Breast epithelium (tissue), 4 donors: ENCODE measurements at regions of chr5 and their contacts with region 1.

Region 1: GRCh38 chr5:115884704-115885103 is 43.0 kb downstream of the AP3S1 start:
- DNase-seq: no peak
- H3K4me3 ChIP-seq: no peak overlapping the region
- H3K27ac ChIP-seq: no peak overlapping the region
- H3K4me1 ChIP-seq: no peaks in the 10 kb centered on the region
- H3K27me3 ChIP-seq: no peaks in the 10 kb centered on the region
- CTCF ChIP-seq: no peak
- POLR2A ChIP-seq: no peak

Region 2: DNA sequence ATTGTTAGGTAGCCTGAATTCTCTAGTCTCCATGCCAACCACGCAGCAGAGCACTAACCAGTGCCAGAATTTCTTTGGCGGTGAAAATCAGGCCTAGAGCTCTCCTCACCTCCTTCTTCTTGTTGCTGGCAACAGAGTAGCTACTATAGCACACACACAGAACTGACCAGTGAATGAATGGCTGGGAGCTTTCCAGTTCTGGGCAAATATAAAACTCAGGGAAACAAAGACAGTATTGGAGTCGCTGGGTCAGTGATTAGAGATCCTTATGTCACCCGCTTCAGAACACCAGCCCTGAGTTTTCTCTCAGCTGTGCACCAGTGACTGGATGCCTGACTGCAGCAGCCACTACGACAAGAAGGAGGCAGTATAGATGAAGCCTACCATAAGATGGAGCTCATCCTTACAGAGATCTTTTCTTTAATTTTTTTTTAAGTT is 313.2 kb before region 1 on chr5:
- intact Hi-C with region 1: loop called (anchors 5 kb)
- DNase-seq: peak in 1 of 2 donors; percentile 69
- H3K4me3 ChIP-seq: no peak overlapping the region
- H3K27ac ChIP-seq: peak overlapping the region; percentile 44 to 50
- H3K4me1 ChIP-seq: no peaks in the 10 kb centered on the region
- H3K27me3 ChIP-seq: no peaks in the 10 kb centered on the region
- CTCF ChIP-seq: no peak
- POLR2A ChIP-seq: no peak

Region 3: GRCh38 chr5:115898656-115899055 is 14.0 kb after region 1 on chr5:
- intact Hi-C with region 1: no loop called
- DNase-seq: no peak
- H3K4me3 ChIP-seq: no peak overlapping the region
- H3K27ac ChIP-seq: no peak overlapping the region
- H3K4me1 ChIP-seq: no peaks in the 10 kb centered on the region
- H3K27me3 ChIP-seq: no peaks in the 10 kb centered on the region
- CTCF ChIP-seq: no peak
- POLR2A ChIP-seq: no peak

Region 4: GRCh38 chr5:117568622-117569021 is 1683.9 kb after region 1 on chr5:
- intact Hi-C with region 1: no loop called
- DNase-seq: no peak
- H3K4me3 ChIP-seq: no peak overlapping the region
- H3K27ac ChIP-seq: no peak overlapping the region
- H3K4me1 ChIP-seq: no peaks in the 10 kb centered on the region
- H3K27me3 ChIP-seq: no peaks in the 10 kb centered on the region
- CTCF ChIP-seq: no peak
- POLR2A ChIP-seq: no peak